ENCODE measurements at regions of chr17 and their contacts with region 1.

Region 1: GRCh38 chr17:60036796-60037612 is 41.7 kb downstream of the HEATR6 start:
- H3K4me3 ChIP-seq: no peak overlapping the region
- H3K27ac ChIP-seq: no peak overlapping the region
- H3K4me1 ChIP-seq: no peaks in the 10 kb centered on the region
- CTCF ChIP-seq: peak; percentile 87

Region 2: GRCh38 chr17:59746849-59747445 is 290.1 kb before region 1 on chr17:
- CTCF ChIA-PET with region 1: interaction called, 37 read pairs
- POLR2A ChIA-PET with region 1: no interaction called
- H3K4me3 ChIP-seq: no peak overlapping the region
- H3K27ac ChIP-seq: no peak overlapping the region
- H3K4me1 ChIP-seq: no peaks in the 10 kb centered on the region
- CTCF ChIP-seq: no peak

Region 3: DNA sequence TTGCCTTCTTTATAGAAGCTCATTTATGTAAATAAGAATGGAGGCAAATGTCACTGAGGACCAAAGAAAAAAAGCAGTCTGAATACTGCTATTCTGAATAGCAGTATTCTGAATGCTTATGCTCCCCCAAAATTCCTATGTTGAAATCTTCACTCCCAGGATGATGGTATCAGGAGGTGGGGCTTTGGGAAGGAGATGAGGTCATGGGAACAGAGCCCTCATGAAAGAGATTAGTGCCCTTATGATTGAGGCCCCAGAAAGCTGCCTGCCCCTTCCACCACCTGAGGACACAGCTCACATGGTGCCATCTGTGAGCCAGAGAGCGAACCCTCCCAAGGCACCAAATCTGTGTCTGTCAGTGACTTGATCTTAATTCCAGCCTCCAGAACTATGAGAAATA is 12.9 kb after region 1 on chr17:
- CTCF ChIA-PET with region 1: interaction called, 18 read pairs
- POLR2A ChIA-PET with region 1: no interaction called
- H3K4me3 ChIP-seq: no peak overlapping the region
- H3K27ac ChIP-seq: no peak overlapping the region
- H3K4me1 ChIP-seq: no peaks in the 10 kb centered on the region
- CTCF ChIP-seq: no peak

Region 4: GRCh38 chr17:60077672-60078519 is 40.9 kb after region 1 on chr17:
- CTCF ChIA-PET with region 1: interaction called, 13 read pairs
- POLR2A ChIA-PET with region 1: no interaction called
- H3K4me3 ChIP-seq: peak overlapping the region; percentile 79
- H3K27ac ChIP-seq: peak overlapping the region; percentile 85; the same call in 1 of the 2 replicates
- H3K4me1 ChIP-seq: peaks cover 13% of the 10 kb centered on the region
- CTCF ChIP-seq: no peak

Measured in HEK293 (cell line).